ENCODE measurements at regions of chr19 and their contacts with region 1.

Region 1: GRCh38 chr19:3984908-3985642 is at the start of gene EEF2:
- DNase-seq: peak; percentile 97
- ATAC-seq: peak; percentile 56
- H3K4me3 ChIP-seq: peak within 1 kb of the TSS; percentile 66 to 93 (median 75)
- H3K4me3 Mint-ChIP-seq: peak within 1 kb of the TSS; percentile 98
- H3K27ac ChIP-seq: peak within 1 kb of the TSS; percentile 78 to 90
- H3K27ac Mint-ChIP-seq: peak within 1 kb of the TSS; percentile 97
- H3K4me1 ChIP-seq: peaks cover 40 to 57% of the 10 kb centered on the region in 2 donors
- H3K4me1 Mint-ChIP-seq: peaks cover 62% of the 10 kb centered on the region
- H3K27me3 ChIP-seq: no peaks in the 10 kb centered on the region
- H3K27me3 Mint-ChIP-seq: no peaks in the 10 kb centered on the region
- CTCF ChIP-seq: no peak
- total RNA-seq, gene EEF2: 2,947 and 3,167 TPM in 2 replicates

Region 2: GRCh38 chr19:3035542-3036118 is 949.4 kb before region 1 on chr19:
- CTCF ChIA-PET with region 1: no interaction called
- POLR2A ChIA-PET with region 1: interaction called, 14 read pairs
- intact Hi-C with region 1: no loop called
- DNase-seq: peak; percentile 97
- ATAC-seq: peak; percentile 91
- H3K4me3 ChIP-seq: peak overlapping the region; percentile 66 to 93 (median 72)
- H3K4me3 Mint-ChIP-seq: peak overlapping the region; percentile 87
- H3K27ac ChIP-seq: peak overlapping the region; percentile 65 to 78
- H3K27ac Mint-ChIP-seq: peak overlapping the region; percentile 92
- H3K4me1 ChIP-seq: peaks cover 12 to 19% of the 10 kb centered on the region in 2 donors
- H3K4me1 Mint-ChIP-seq: peaks cover 21% of the 10 kb centered on the region
- H3K27me3 ChIP-seq: no peaks in the 10 kb centered on the region
- H3K27me3 Mint-ChIP-seq: peaks cover 10% of the 10 kb centered on the region
- CTCF ChIP-seq: no peak

Region 3: GRCh38 chr19:4007021-4007835 is 22.2 kb after region 1 on chr19 and contains the start of gene PIAS4:
- CTCF ChIA-PET with region 1: interaction called, 22 read pairs
- POLR2A ChIA-PET with region 1: interaction called, 13 read pairs
- intact Hi-C with region 1: loop called (anchors 1 kb)
- DNase-seq: peak; percentile 98
- ATAC-seq: peak; percentile 86
- H3K4me3 ChIP-seq: peak within 1 kb of the TSS; percentile 27 to 84 (median 74)
- H3K4me3 Mint-ChIP-seq: peak within 1 kb of the TSS; percentile 93
- H3K27ac ChIP-seq: peak within 1 kb of the TSS; percentile 55 to 71
- H3K27ac Mint-ChIP-seq: peak within 1 kb of the TSS; percentile 92
- H3K4me1 ChIP-seq: peaks cover 14 to 35% of the 10 kb centered on the region in 2 donors
- H3K4me1 Mint-ChIP-seq: peaks cover 33% of the 10 kb centered on the region
- H3K27me3 ChIP-seq: no peaks in the 10 kb centered on the region
- H3K27me3 Mint-ChIP-seq: no peaks in the 10 kb centered on the region
- CTCF ChIP-seq: no peak
- total RNA-seq, gene PIAS4: 56.8 and 57.2 TPM in 2 replicates

Region 4: DNA sequence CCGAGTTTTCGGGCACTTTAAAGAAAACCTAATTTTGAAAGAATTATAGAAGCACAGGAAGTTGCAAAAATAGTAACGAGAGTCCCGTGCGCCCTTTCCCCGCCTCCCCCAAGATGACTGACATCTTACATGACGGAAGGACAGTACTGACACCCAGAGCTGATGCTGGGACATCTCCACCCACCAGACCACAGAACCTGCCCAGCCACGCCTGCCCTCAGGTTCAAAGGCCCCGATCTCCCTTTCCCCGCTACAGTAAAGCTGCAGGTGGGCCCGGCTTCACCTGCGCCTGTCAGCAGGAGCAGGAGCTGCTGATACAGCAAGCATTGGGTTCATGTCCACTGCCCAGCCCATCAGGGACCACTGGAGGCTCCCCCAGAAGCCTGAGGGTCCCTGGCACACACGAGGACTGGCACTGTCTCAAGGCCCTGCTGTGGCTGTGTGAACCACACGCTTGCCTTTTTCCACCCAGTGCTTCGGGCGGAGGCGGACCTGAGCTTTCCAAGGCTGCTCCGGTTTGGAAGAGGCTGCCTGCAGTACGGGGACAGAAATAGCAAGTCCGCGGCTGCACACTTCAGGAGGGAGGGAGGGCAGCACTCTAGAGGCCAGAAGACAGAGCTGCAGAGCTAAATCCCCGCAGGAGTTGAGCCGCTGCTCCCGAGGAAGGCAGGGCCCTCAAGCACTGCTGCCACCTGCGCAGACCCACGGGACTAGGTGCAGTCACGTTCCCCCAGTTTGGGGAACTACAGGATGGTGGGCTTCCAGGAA is 130.2 kb after region 1 on chr19:
- CTCF ChIA-PET with region 1: interaction called, 6 read pairs
- POLR2A ChIA-PET with region 1: interaction called, 10 read pairs
- intact Hi-C with region 1: loop called (anchors 5 kb)
- DNase-seq: peak; percentile 74
- ATAC-seq: peak; percentile 93
- H3K4me3 ChIP-seq: peak overlapping the region in 4 of 5 experiments; percentile 5 to 39 (median 22)
- H3K4me3 Mint-ChIP-seq: peak overlapping the region; percentile 83
- H3K27ac ChIP-seq: peak overlapping the region; percentile 75 to 84
- H3K27ac Mint-ChIP-seq: peak overlapping the region; percentile 92
- H3K4me1 ChIP-seq: peaks cover 24 to 35% of the 10 kb centered on the region in 2 donors
- H3K4me1 Mint-ChIP-seq: peaks cover 45% of the 10 kb centered on the region
- H3K27me3 ChIP-seq: no peaks in the 10 kb centered on the region
- H3K27me3 Mint-ChIP-seq: no peaks in the 10 kb centered on the region
- CTCF ChIP-seq: no peak

Region 5: GRCh38 chr19:4182084-4182810 is 197.2 kb after region 1 on chr19 and contains the starts of genes ANKRD24 and SIRT6:
- CTCF ChIA-PET with region 1: interaction called, 6 read pairs
- POLR2A ChIA-PET with region 1: interaction called, 6 read pairs
- intact Hi-C with region 1: loop called (anchors 1 kb)
- DNase-seq: peak; percentile 97
- ATAC-seq: peak; percentile 83
- H3K4me3 ChIP-seq: peak within 1 kb of the TSS; percentile 65 to 91 (median 85)
- H3K4me3 Mint-ChIP-seq: peak within 1 kb of the TSS; percentile 99
- H3K27ac ChIP-seq: peak within 1 kb of the TSS; percentile 72 to 95
- H3K27ac Mint-ChIP-seq: peak within 1 kb of the TSS; percentile 98
- H3K4me1 ChIP-seq: peaks cover 20 to 32% of the 10 kb centered on the region in 2 donors
- H3K4me1 Mint-ChIP-seq: peaks cover 37% of the 10 kb centered on the region
- H3K27me3 ChIP-seq: no peaks in the 10 kb centered on the region
- H3K27me3 Mint-ChIP-seq: peaks cover 6% of the 10 kb centered on the region
- CTCF ChIP-seq: no peak
- total RNA-seq, gene ANKRD24: 0.37 and 1.4 TPM in 2 replicates
- total RNA-seq, gene SIRT6: 27.8 and 30.4 TPM in 2 replicates

Region 6: DNA sequence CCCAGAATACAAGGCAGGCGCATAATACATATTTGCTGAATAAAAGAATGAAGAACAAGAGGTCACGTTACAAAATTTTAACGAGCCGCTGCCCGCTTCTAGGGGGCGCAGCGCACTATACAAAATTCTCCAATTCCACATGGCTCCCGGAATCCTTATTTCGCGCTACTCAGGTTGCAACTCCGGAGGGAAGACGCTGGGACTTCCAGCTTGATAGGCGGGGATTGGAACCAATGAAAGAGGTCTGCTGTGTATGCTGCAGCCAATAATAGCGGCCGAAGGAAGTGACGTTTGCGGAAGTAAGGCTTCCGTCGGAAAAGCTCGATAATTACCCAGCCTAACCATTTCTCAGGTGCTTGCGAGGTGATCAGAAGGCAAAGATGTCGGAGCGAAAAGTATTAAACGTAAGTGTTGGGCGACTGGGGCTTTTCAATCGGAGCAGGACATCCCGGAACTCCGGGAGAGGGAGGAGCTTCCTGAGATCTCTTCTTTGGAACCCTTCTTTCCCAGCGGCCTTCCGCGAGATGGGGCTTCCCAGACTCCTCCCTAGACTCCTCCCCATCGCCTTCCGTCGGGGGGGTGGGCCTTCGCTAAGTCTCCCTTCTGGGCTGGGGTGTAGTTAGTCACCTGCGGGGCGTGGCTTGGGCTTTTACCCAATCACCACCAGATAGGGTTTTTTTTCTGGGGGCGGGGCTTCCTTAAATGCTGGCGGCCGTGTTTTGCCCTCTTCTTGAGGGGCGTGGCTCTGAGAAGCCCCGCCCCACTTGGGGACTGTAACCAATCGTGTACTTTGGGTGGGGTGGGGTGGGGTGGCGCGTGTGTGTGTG is 261.9 kb after region 1 on chr19 and contains the start of gene YJU2:
- CTCF ChIA-PET with region 1: interaction called, 3 read pairs
- POLR2A ChIA-PET with region 1: interaction called, 5 read pairs
- intact Hi-C with region 1: loop called (anchors 5 kb)
- DNase-seq: peak; percentile 99
- ATAC-seq: peak; percentile 94
- H3K4me3 ChIP-seq: peak within 1 kb of the TSS; percentile 86 to 99 (median 98)
- H3K4me3 Mint-ChIP-seq: peak within 1 kb of the TSS; percentile 91
- H3K27ac ChIP-seq: peak within 1 kb of the TSS; percentile 99 to 100
- H3K27ac Mint-ChIP-seq: peak within 1 kb of the TSS; percentile 95
- H3K4me1 ChIP-seq: peaks cover 12 to 24% of the 10 kb centered on the region in 2 donors
- H3K4me1 Mint-ChIP-seq: peaks cover 23% of the 10 kb centered on the region
- H3K27me3 ChIP-seq: no peaks in the 10 kb centered on the region
- H3K27me3 Mint-ChIP-seq: no peaks in the 10 kb centered on the region
- CTCF ChIP-seq: peak; percentile 40
- total RNA-seq, gene YJU2: 39.8 and 40.3 TPM in 2 replicates

Measured in B cell (primary cell).